Activated T-helper 2 cell treated with anti-CD3 and anti-CD28 coated beads, Interferon-gamma antibody, Interleukin-2, Interleukin-4, amounts not matched to agents 10 μg/mL and 5 μg/mL and 100 μg/mL, durations not matched to agents 14 hours and 24 hours and 36 hours (primary cell): ENCODE measurements at regions of chr5 and their contacts with region 1.

Region 1: DNA sequence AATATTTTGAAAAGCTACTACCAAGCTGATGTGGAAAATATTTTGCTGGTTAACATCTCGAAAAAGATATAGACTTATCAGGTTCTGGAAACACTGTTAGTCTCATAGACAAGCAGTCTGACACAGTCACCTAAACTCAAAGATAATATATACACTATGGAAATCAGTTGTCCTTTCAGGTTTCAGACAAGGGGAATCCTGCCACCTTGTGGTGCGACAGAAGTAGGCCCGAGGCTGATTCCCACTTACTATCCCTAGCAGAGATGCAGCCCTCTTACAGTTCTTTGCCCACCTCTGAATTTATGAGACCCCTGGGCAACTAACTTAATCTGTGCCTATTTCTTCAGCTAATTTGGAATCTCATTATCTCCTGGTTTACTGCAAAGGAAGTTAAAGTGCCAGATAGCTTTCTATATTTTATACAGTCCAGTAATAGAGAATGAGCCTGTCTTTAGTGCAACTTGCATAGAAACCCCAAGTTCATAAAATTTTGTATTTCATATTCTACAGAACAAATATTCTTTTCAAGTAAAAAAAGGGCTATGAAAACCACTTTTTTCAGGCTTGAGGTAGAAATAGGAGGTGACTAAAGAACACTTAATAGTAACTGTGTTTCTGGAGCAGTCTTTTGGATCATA is 16.9 kb downstream of the RAD1 start:
- DNase-seq: peak; percentile 38
- H3K4me3 Mint-ChIP-seq: no peak overlapping the region
- H3K27ac Mint-ChIP-seq: no peak overlapping the region
- H3K4me1 Mint-ChIP-seq: no peaks in the 10 kb centered on the region
- H3K27me3 Mint-ChIP-seq: no peaks in the 10 kb centered on the region

Region 2: DNA sequence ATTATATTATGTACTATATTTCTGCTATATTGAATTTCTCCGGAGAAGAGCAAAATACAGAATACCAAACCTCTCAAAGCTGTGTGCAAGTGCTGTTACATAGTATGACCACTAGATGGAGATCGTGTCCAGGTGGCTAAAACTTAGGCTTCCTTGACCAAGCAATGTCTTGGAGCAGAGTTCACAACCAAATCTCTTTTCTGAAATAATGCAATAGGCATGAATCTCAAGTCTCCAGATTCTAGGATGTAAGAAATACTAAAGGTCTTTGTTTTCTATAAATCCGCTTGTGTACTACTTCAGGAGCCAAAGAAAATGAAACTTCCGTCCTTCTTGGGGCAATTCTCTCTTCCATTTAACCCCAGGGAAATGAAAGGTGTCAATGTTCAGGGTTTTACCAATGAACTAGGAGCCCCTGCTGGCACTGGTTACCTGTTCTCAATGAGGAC is 423.8 kb before region 1 on chr5:
- intact Hi-C with region 1: loop called (anchors 1 kb)
- DNase-seq: no peak
- H3K4me3 Mint-ChIP-seq: no peak overlapping the region
- H3K27ac Mint-ChIP-seq: no peak overlapping the region
- H3K4me1 Mint-ChIP-seq: peaks cover 4% of the 10 kb centered on the region
- H3K27me3 Mint-ChIP-seq: peaks cover 13% of the 10 kb centered on the region

Region 3: DNA sequence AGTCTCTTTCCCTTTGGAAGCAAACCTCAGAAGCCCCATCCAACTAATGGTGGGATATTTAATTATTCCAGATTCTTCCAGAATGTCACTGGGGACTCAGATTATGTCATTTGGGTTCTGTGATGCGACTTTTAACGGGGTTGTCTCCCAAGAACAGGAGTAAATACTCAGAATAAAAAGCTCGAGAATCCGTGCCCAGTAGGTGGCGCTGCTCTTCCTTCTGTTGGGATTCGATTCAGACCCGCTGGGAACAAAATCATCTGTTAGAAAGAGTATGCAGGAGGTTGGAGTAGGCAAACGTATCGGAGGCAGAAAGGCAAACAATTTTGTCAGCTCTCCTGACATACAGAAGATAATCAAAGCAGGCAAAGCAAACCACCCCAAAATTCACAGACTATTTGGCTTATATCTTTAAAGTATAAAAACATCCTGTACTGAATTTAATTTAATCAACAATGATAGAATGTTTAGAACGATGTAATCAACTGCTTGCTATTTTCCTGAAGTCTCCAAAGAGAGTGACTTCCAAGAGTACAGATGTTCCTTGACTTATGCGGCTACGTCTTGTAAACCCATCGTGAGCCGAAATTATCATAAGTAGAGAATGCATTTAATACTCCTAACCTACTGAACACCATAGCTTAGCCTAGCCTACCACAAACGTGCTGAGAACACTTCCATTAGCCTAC is 412.1 kb before region 1 on chr5:
- intact Hi-C with region 1: loop called (anchors 1 kb)
- DNase-seq: peak; percentile 45
- H3K4me3 Mint-ChIP-seq: no peak overlapping the region
- H3K27ac Mint-ChIP-seq: no peak overlapping the region
- H3K4me1 Mint-ChIP-seq: peaks cover 6% of the 10 kb centered on the region
- H3K27me3 Mint-ChIP-seq: peaks cover 16% of the 10 kb centered on the region

Region 4: GRCh38 chr5:34522599-34523386 is 375.6 kb before region 1 on chr5:
- intact Hi-C with region 1: loop called (anchors 1 kb)
- DNase-seq: peak; percentile 12
- H3K4me3 Mint-ChIP-seq: no peak overlapping the region
- H3K27ac Mint-ChIP-seq: no peak overlapping the region
- H3K4me1 Mint-ChIP-seq: peaks cover 5% of the 10 kb centered on the region
- H3K27me3 Mint-ChIP-seq: peaks cover 4% of the 10 kb centered on the region

Region 5: DNA sequence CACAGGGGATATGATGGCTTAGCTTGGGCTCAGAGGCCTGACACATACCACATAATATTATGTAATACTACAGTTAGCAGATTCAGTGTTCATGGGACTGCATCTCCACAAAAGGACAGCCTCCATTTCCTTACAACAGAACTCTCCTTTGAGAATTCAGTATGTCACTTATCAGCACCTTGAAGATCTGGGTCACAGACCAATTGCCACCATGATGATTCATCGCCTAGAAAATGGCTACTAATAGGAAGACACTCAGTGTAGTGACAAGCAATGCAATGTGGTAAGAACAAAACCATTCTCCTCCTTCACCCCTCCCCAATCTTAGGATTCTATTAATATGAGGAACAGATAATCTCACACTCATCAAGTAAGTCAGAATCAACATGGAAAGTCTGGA is 370.6 kb after region 1 on chr5:
- intact Hi-C with region 1: no loop called
- DNase-seq: no peak
- H3K4me3 Mint-ChIP-seq: no peak overlapping the region
- H3K27ac Mint-ChIP-seq: no peak overlapping the region
- H3K4me1 Mint-ChIP-seq: no peaks in the 10 kb centered on the region
- H3K27me3 Mint-ChIP-seq: no peaks in the 10 kb centered on the region